ENCODE measurements at regions of chr2 and their contacts with region 1.

Region 1: GRCh38 chr2:129212299-129212958 is 767.0 kb upstream of the RAB6C start:
- DNase-seq: no peak
- H3K4me3 ChIP-seq: no peak overlapping the region
- H3K27ac ChIP-seq: no peak overlapping the region
- H3K4me1 ChIP-seq: no peaks in the 10 kb centered on the region
- H3K27me3 ChIP-seq: no peaks in the 10 kb centered on the region
- CTCF ChIP-seq: no peak
- EP300 ChIP-seq: no peak
- POLR2A ChIP-seq: no peak

Region 2: GRCh38 chr2:127969446-127969845 is 1243.0 kb before region 1 on chr2:
- intact Hi-C with region 1: no loop called
- DNase-seq: no peak
- H3K4me3 ChIP-seq: no peak overlapping the region
- H3K27ac ChIP-seq: no peak overlapping the region
- H3K4me1 ChIP-seq: no peaks in the 10 kb centered on the region
- H3K27me3 ChIP-seq: no peaks in the 10 kb centered on the region
- CTCF ChIP-seq: no peak
- EP300 ChIP-seq: no peak
- POLR2A ChIP-seq: no peak

Region 3: GRCh38 chr2:129229830-129230441 is 17.5 kb after region 1 on chr2:
- intact Hi-C with region 1: loop called in 1 of 4 experiments (anchors 1 kb)
- DNase-seq: no peak
- H3K4me3 ChIP-seq: no peak overlapping the region
- H3K27ac ChIP-seq: no peak overlapping the region
- H3K4me1 ChIP-seq: no peaks in the 10 kb centered on the region
- H3K27me3 ChIP-seq: no peaks in the 10 kb centered on the region
- CTCF ChIP-seq: no peak
- EP300 ChIP-seq: no peak
- POLR2A ChIP-seq: no peak

Region 4: DNA sequence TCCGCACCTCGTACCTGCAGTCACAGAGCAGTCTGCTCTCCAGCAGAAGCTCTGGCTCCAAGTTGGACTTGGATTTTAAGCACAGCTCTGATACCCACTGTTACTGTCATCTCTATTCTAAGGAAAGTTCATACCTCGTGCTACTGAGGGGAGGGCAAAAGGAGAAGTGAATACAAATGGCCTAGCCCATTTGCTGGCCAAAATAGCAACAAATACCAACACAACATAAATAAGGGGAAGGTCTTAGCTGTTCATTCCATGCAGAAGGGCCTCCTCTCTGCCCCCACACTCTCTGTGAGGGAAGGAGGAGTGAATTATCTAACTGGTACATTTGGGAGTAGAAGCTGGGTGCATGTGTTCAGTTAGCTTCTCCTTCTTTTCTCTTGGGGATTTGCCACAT is 27.6 kb after region 1 on chr2:
- intact Hi-C with region 1: no loop called
- DNase-seq: no peak
- H3K4me3 ChIP-seq: no peak overlapping the region
- H3K27ac ChIP-seq: no peak overlapping the region
- H3K4me1 ChIP-seq: no peaks in the 10 kb centered on the region
- H3K27me3 ChIP-seq: no peaks in the 10 kb centered on the region
- CTCF ChIP-seq: no peak
- EP300 ChIP-seq: no peak
- POLR2A ChIP-seq: no peak

Region 5: GRCh38 chr2:129627437-129627836 is 415.0 kb after region 1 on chr2:
- intact Hi-C with region 1: no loop called
- DNase-seq: no peak
- H3K4me3 ChIP-seq: no peak overlapping the region
- H3K27ac ChIP-seq: no peak overlapping the region
- H3K4me1 ChIP-seq: no peaks in the 10 kb centered on the region
- H3K27me3 ChIP-seq: no peaks in the 10 kb centered on the region
- CTCF ChIP-seq: no peak
- EP300 ChIP-seq: no peak
- POLR2A ChIP-seq: no peak